Psoas muscle (tissue), 8 donors: ENCODE measurements at regions of chr3 and their contacts with region 1.

Region 1: GRCh38 chr3:114393367-114394072 is 99.7 kb downstream of the TIGIT start:
- DNase-seq: no peak
- ATAC-seq: peak in 2 of 4 donors; percentile 49 to 64
- H3K4me3 ChIP-seq: no peak overlapping the region
- H3K27ac ChIP-seq: no peak overlapping the region
- H3K4me1 ChIP-seq: peaks cover 40% of the 10 kb centered on the region
- H3K27me3 ChIP-seq: no peaks in the 10 kb centered on the region
- CTCF ChIP-seq: no peak

Region 2: GRCh38 chr3:113468539-113468938 is 925.0 kb before region 1 on chr3:
- intact Hi-C with region 1: loop called in 1 of 2 experiments (anchors 5 kb)
- DNase-seq: no peak
- ATAC-seq: no peak
- H3K4me3 ChIP-seq: no peak overlapping the region
- H3K27ac ChIP-seq: no peak overlapping the region
- H3K4me1 ChIP-seq: no peaks in the 10 kb centered on the region
- H3K27me3 ChIP-seq: no peaks in the 10 kb centered on the region
- CTCF ChIP-seq: no peak